Dorsolateral prefrontal cortex (tissue), 120 donors: ENCODE measurements at regions of chr10 and their contacts with region 1.

Region 1: GRCh38 chr10:71390461-71390835 is 6.3 kb upstream of the CDH23 start:
- DNase-seq: peak in 8 of 10 donors; percentile 45 to 73 (median 60)
- H3K4me3 ChIP-seq: peak overlapping the region in 2 of 59 donors; percentile 20 to 26
- H3K27ac ChIP-seq: peak overlapping the region in 57 of 59 donors; percentile 21 to 92 (median 76)
- H3K27me3 ChIP-seq: no peaks in the 10 kb centered on the region
- CTCF ChIP-seq: peak in 29 of 56 donors; percentile 8 to 58 (median 24)

Region 2: GRCh38 chr10:71150796-71151195 is 239.7 kb before region 1 on chr10:
- intact Hi-C with region 1: no loop called
- DNase-seq: no peak
- H3K4me3 ChIP-seq: no peak overlapping the region
- H3K27ac ChIP-seq: no peak overlapping the region
- H3K27me3 ChIP-seq: peaks cover 0 to 5% (median 0%) of the 10 kb centered on the region in 45 donors
- CTCF ChIP-seq: no peak

Region 3: GRCh38 chr10:71569775-71570588 is 179.5 kb after region 1 on chr10:
- intact Hi-C with region 1: loop called in 1 of 2 experiments (anchors 5 kb)
- DNase-seq: peak in 9 of 10 donors; percentile 52 to 83 (median 74)
- H3K4me3 ChIP-seq: no peak overlapping the region
- H3K27ac ChIP-seq: peak overlapping the region in 1 of 59 donors; percentile 18
- H3K27me3 ChIP-seq: no peaks in the 10 kb centered on the region
- CTCF ChIP-seq: peak; percentile 75 to 94 (median 87)

Region 4: GRCh38 chr10:71696628-71697326 is 306.3 kb after region 1 on chr10:
- intact Hi-C with region 1: loop called in 1 of 2 experiments (anchors 5 kb)
- DNase-seq: peak in 6 of 10 donors; percentile 35 to 70 (median 50)
- H3K4me3 ChIP-seq: no peak overlapping the region
- H3K27ac ChIP-seq: no peak overlapping the region
- H3K27me3 ChIP-seq: no peaks in the 10 kb centered on the region
- CTCF ChIP-seq: peak in 55 of 56 donors; percentile 41 to 83 (median 73)

Region 5: DNA sequence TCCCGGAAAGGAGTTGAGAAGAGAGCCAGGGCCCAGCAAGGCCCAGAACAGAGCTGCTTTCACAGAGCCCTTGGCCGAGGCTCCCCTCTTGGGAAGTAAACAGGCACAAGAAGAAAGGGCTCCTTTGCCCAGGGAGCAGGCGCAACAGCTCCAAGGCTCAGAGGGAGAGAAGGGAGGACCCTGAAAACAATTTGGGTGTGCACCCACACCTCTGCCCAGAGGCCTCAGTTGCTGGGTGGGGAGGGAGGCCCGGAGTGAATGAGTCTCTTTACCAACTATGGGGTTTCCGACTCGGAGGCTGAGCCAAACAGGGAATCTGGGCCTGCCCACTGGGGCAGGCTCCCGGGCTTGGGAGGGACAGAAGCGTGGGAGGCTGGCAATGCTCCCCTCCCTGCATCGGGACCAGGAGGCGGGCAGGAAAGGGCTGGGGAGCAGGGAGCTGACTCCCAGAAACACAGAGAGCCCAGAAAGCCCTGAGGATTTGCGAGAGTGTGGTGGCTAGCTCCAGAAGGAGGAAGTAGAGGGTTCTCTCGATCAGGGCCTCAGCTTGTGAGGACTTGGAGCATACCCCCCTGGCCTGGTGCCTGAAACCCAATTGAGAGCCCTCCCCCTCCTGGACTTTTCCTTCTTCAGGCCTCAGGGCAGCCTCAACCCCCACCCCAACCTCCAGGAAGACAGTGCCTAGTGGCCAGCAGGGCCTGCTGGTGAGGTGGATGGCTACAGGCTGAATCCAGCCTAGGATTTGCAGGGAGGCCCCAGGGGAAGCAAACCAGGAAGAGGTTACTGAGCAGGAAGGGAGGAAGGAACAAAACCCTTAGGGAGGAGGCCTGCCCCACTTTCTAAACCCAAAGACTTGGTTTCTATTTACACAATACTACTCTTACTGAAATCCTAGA is 322.9 kb after region 1 on chr10:
- intact Hi-C with region 1: loop called in 1 of 2 experiments (anchors 5 kb)
- DNase-seq: peak; percentile 52 to 86 (median 84)
- H3K4me3 ChIP-seq: peak overlapping the region in 7 of 59 donors; percentile 1 to 36 (median 10)
- H3K27ac ChIP-seq: peak overlapping the region; percentile 87 to 99 (median 97)
- H3K27me3 ChIP-seq: no peaks in the 10 kb centered on the region
- CTCF ChIP-seq: peak in 14 of 56 donors; percentile 5 to 49 (median 18)

Region 6: DNA sequence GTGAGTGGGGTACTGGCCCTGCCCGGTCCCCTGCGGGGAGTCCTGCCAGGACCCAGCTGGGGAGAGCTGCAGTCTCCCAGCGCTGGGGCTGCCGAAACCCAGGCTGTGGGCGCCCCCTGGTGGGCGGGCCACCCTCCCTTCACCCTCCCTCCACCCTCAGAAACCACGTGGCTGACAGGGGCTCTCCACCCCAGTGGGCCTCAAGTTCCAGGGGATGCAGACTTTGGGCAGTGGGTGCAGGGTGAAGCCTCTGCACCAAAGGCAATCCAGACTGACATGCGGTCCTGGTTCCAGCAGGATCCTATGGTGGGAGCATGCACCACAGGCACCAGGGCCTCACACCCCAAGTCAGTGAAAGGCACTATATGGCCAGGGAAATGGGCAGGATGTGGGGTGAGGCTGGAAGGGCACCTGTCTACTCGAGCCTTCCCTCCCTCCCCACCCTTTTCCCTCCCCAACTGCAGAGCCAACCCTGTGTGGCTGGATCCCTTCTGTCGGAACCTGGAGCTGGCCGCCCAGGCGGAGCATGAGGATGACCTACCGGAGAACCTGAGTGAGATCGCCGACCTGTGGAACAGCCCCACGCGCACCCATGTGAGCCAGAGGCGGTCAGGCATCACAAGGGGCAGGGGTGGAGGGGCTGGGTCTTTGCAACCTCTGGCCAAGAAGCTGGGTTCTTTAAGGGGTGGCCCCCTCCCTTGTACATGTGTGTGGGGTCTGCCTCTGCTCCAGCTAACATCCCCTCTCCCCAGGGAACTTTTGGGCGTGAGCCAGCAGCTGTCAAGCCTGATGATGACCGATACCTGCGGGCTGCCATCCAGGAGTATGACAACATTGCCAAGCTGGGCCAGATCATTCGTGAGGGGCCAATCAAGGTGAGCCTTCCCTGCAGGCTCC is 421.8 kb after region 1 on chr10:
- intact Hi-C with region 1: loop called (anchors 5 to 10 kb)
- DNase-seq: peak in 9 of 10 donors; percentile 56 to 83 (median 72)
- H3K4me3 ChIP-seq: no peak overlapping the region
- H3K27ac ChIP-seq: peak overlapping the region in 29 of 59 donors; percentile 6 to 87 (median 45)
- H3K27me3 ChIP-seq: no peaks in the 10 kb centered on the region
- CTCF ChIP-seq: peak; percentile 48 to 91 (median 80)